Activated B cell treated with CpG ODN at 0.5 μM for 24 hours (primary cell): ENCODE measurements at regions of chr12 and their contacts with region 1.

Region 1: DNA sequence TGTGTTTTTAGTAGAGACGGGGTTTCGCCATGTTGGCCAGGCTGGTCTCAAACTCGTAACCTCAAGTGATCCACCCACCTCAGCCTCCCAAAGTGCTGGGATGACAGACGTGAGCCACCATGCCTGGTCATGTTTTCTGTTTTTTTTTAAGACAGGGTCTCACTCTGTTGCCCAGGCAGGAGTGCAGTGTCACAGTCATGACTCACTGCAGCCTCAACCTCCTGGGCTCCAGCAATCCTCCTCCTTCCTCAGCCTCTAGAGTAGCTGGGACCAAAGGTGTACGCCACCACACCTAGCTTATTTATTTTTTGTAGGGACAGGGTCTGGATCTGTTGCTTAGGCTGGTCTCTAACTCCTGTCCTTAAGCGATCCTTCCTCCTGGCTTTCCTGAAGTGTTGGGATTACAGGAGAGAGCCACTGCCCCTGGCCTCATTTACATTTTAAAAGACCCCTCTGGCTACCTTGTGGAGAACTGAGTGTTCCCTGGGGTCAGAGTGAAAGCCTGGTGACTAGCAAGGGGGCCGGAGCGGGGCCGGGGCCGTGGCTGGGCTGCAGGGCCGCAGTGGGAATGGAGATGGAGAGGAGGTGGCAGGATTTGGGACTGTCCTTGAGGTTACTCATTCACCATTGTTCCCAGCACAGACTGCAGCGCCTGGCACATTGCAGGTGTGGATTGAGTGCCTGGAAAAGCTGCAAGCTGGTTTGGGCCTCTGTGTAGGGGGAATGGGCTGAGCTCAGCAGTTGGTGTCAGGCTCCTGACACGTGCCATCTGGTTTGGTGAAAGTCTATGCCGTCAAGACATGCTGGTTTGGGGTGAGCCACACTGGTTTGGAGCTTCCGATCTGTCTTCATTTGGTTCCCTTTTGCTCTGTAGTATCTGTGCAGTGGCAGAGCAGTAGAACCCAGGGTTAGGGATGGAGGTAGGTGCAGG is 18.1 kb downstream of the KMT5A start:
- DNase-seq: no peak
- ATAC-seq: no peak
- H3K4me3 Mint-ChIP-seq: no peak overlapping the region
- H3K27ac Mint-ChIP-seq: peak overlapping the region; percentile 8
- H3K4me1 Mint-ChIP-seq: peaks cover 8% of the 10 kb centered on the region
- H3K27me3 Mint-ChIP-seq: no peaks in the 10 kb centered on the region
- CTCF ChIP-seq: no peak

Region 2: GRCh38 chr12:123264681-123265438 is 137.2 kb before region 1 on chr12:
- CTCF ChIA-PET with region 1: no interaction called
- POLR2A ChIA-PET with region 1: interaction called, 10 read pairs
- intact Hi-C with region 1: no loop called
- DNase-seq: no peak
- ATAC-seq: no peak
- H3K4me3 Mint-ChIP-seq: no peak overlapping the region
- H3K27ac Mint-ChIP-seq: no peak overlapping the region
- H3K4me1 Mint-ChIP-seq: peaks cover 20% of the 10 kb centered on the region
- H3K27me3 Mint-ChIP-seq: no peaks in the 10 kb centered on the region
- CTCF ChIP-seq: no peak